ENCODE measurements at regions of chr5 and their contacts with region 1.

Region 1: DNA sequence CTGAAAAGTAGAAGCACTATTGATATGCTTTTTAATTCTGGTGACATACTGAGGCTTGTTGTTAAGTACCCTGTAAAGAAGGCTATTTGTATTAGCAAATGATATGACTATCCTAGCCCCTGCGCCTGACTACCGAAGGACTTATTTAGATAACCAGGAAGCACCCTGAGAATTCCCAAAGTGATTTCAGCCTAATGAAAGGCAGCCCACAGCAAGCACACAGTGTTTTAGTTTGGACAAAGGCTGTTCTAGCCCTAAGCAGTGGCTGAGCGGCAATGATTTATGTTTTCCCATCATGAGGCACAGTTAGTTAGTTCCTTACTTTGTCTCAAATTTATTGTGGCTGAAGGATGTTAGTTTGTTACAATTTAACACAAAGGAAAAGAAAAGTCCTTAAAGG is 235.3 kb downstream of the KCTD16 start:
- DNase-seq: no peak
- H3K4me3 ChIP-seq: no peak overlapping the region
- H3K27ac ChIP-seq: no peak overlapping the region
- H3K4me1 ChIP-seq: no peaks in the 10 kb centered on the region
- H3K27me3 ChIP-seq: no peaks in the 10 kb centered on the region
- CTCF ChIP-seq: no peak
- POLR2A ChIP-seq: no peak

Region 2: DNA sequence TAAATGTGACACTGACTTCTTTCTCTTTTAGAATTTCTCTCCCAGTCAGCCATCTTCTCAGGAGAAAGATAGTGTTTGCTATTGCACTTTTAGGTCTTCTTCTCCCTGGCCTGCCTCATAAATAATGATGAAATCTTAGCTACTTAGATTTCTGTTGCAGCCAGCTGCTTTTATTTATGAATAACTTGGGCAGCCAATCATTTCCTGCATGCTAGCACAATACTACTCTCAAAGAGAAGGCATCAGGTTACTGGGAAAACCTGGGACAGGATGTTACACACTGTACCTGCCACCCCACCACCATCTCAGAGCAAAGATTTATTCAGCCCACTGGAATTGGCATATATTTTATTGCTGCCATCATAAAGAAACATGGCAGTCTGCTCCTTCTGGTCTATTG is 1162.6 kb after region 1 on chr5:
- intact Hi-C with region 1: loop called (anchors 5 kb)
- DNase-seq: no peak
- H3K4me3 ChIP-seq: no peak overlapping the region
- H3K27ac ChIP-seq: no peak overlapping the region
- H3K4me1 ChIP-seq: no peaks in the 10 kb centered on the region
- H3K27me3 ChIP-seq: no peaks in the 10 kb centered on the region
- CTCF ChIP-seq: no peak
- POLR2A ChIP-seq: no peak

Measured in breast epithelium (tissue), 4 donors.